Right lobe of liver (tissue), 6 donors: ENCODE measurements at regions of chr7 and their contacts with region 1.

Region 1: GRCh38 chr7:31100445-31100844 is 48.3 kb downstream of the ADCYAP1R1 start:
- DNase-seq: no peak
- ATAC-seq: no peak
- H3K4me3 ChIP-seq: no peak overlapping the region
- H3K27ac ChIP-seq: no peak overlapping the region
- H3K4me1 ChIP-seq: no peaks in the 10 kb centered on the region
- H3K27me3 ChIP-seq: no peaks in the 10 kb centered on the region
- CTCF ChIP-seq: no peak
- POLR2A ChIP-seq: no peak

Region 2: GRCh38 chr7:30996256-30996655 is 104.2 kb before region 1 on chr7:
- intact Hi-C with region 1: loop called in 1 of 2 experiments (anchors 10 kb)
- DNase-seq: no peak
- ATAC-seq: peak in 1 of 4 donors; percentile 23
- H3K4me3 ChIP-seq: no peak overlapping the region
- H3K27ac ChIP-seq: no peak overlapping the region
- H3K4me1 ChIP-seq: no peaks in the 10 kb centered on the region
- H3K27me3 ChIP-seq: no peaks in the 10 kb centered on the region
- CTCF ChIP-seq: no peak
- POLR2A ChIP-seq: no peak